Gastrocnemius medialis (tissue), 4 donors: ENCODE measurements at regions of chr12 and their contacts with region 1.

Region 1: GRCh38 chr12:120725659-120726509 is at the start of gene ACADS:
- DNase-seq: peak; percentile 85 to 88
- ATAC-seq: peak; percentile 83 to 89
- H3K4me3 ChIP-seq: peak within 1 kb of the TSS; percentile 78 to 92 (median 86)
- H3K27ac ChIP-seq: peak within 1 kb of the TSS; percentile 92 to 96 (median 94)
- H3K4me1 ChIP-seq: peaks cover 16 to 30% of the 10 kb centered on the region in 2 donors
- H3K27me3 ChIP-seq: no peaks in the 10 kb centered on the region
- CTCF ChIP-seq: peak in 1 of 5 experiments; percentile 25
- POLR2A ChIP-seq: peak; percentile 86 to 88
- total RNA-seq, gene ACADS: 166 to 224 (median 200) TPM

Region 2: DNA sequence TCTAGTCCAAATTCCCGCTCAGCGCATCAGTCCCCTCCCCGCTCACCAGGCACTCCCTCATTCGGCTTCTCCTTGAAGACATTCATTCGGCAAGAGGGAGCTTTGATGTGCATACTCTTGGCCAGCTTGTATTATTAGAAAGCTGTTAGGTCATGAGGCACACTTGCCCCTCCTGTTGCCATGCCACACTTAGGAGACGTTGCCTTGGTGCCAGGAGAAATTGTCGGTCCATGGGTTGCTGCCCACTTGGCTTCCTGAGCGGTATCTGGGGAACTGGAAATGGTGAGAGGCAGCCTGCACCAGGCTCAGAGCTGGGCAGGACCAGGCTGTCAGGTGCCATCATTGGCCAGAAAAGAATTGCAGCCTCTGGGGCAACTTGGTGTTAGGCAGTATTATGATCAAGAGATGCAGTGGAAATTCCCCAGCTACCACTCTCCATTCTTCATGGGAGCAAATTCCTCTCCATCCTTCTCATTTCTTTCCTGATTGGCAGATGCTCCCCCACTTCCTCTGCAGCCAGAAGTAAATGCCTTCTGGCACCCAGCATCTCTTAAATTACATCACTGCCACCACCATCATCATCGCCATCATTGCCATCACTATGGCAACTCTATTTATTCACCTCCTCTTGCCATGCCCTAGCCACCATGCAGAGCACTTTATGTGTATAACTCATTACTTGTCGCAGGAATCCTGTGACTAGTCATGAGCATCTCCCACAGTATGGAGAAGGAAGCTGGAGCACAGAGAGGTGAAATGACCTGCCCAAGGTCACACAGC is 73.0 kb before region 1 on chr12:
- in situ Hi-C with region 1: no loop called
- intact Hi-C with region 1: no loop called
- DNase-seq: no peak
- ATAC-seq: peak in 1 of 2 donors; percentile 27
- H3K4me3 ChIP-seq: no peak overlapping the region
- H3K27ac ChIP-seq: peak overlapping the region in 1 of 4 donors; percentile 18
- H3K4me1 ChIP-seq: peaks cover 14 to 17% of the 10 kb centered on the region in 2 donors
- H3K27me3 ChIP-seq: peaks cover 0 to 11% (median 2%) of the 10 kb centered on the region in 3 donors
- CTCF ChIP-seq: no peak
- POLR2A ChIP-seq: no peak

Region 3: DNA sequence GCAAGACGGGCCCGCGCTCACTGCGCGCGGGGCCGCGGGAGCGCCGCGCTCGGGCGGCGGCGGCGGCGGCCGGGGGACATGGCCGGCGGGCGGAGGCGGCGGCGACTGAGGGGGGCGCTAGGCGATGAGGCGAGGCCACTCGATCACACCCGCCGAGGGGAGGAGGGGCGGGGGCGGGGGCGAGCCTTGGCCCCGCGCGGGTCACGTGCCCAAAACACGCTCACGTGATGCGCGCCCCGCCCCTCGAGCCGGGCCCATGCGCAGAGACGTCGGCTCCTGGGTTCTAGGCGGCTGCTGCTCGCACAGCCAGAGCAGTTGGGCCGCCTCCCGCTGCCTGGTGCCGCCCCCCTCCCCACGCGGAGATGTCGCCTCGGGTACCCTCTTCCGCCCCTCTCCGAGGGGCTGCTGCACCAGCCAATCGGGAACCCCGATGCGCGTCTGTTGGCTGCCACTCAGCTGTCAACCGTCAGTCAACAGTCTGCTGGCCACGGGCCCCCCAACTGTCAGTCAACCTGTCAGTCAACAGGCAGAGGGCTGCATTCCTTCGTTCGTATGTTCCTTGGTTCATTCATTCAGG is 178.4 kb after region 1 on chr12 and contains the start of gene SPPL3:
- in situ Hi-C with region 1: no loop called
- intact Hi-C with region 1: loop called (anchors 5 kb)
- DNase-seq: peak; percentile 82 to 89
- ATAC-seq: peak; percentile 84 to 85
- H3K4me3 ChIP-seq: peak within 1 kb of the TSS; percentile 89 to 99 (median 96)
- H3K27ac ChIP-seq: peak within 1 kb of the TSS; percentile 91 to 98 (median 94)
- H3K4me1 ChIP-seq: peaks cover 27 to 30% of the 10 kb centered on the region in 2 donors
- H3K27me3 ChIP-seq: no peaks in the 10 kb centered on the region
- CTCF ChIP-seq: peak in 1 of 5 experiments; percentile 33
- POLR2A ChIP-seq: peak; percentile 76 to 86
- total RNA-seq, gene SPPL3: 10.1 to 21.3 (median 10.6) TPM